ENCODE measurements at regions of chr1 and their contacts with region 1.

Region 1: GRCh38 chr1:113072757-113073478 is at the start of gene LRIG2:
- DNase-seq: peak; percentile 99
- H3K4me3 Mint-ChIP-seq: peak within 1 kb of the TSS; percentile 100
- H3K27ac Mint-ChIP-seq: peak within 1 kb of the TSS; percentile 93
- H3K4me1 Mint-ChIP-seq: peaks cover 20% of the 10 kb centered on the region
- H3K27me3 Mint-ChIP-seq: no peaks in the 10 kb centered on the region
- total RNA-seq, gene LRIG2: 11.8 and 12.7 TPM in 2 replicates

Region 2: GRCh38 chr1:112508278-112509004 is 564.5 kb before region 1 on chr1 and contains the start of gene WNT2B:
- intact Hi-C with region 1: loop called (anchors 2 kb)
- DNase-seq: peak; percentile 86
- H3K4me3 Mint-ChIP-seq: peak within 1 kb of the TSS; percentile 82
- H3K27ac Mint-ChIP-seq: no peak within 1 kb of the TSS
- H3K4me1 Mint-ChIP-seq: peaks cover 8% of the 10 kb centered on the region
- H3K27me3 Mint-ChIP-seq: peaks cover 57% of the 10 kb centered on the region
- total RNA-seq, gene WNT2B: 0.05 TPM in 1 of 2 replicates, not detected in the other

Region 3: GRCh38 chr1:112809253-112809684 is 263.6 kb before region 1 on chr1:
- intact Hi-C with region 1: loop called (anchors 2 kb)
- DNase-seq: peak; percentile 91
- H3K4me3 Mint-ChIP-seq: no peak overlapping the region
- H3K27ac Mint-ChIP-seq: no peak overlapping the region
- H3K4me1 Mint-ChIP-seq: peaks cover 2% of the 10 kb centered on the region
- H3K27me3 Mint-ChIP-seq: peaks cover 22% of the 10 kb centered on the region

Region 4: DNA sequence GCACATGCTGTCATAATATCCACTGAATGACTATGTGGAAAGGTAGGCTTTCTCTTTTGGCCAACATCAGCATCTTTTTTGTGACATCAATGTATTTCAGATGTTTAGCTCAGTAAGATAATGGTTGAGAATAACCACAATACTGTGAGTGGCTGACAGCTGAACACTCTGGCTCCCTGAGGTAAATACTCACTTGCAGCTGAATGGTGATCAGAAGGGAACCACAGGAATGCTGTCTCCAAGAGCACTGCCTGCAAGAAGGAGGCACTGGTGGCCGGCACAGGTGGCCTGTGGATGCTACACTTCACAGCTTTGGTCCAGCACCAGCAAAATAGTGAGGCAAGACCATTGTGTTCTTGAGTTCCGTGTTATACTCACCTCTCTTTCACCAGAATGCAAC is 239.1 kb before region 1 on chr1:
- intact Hi-C with region 1: no loop called
- DNase-seq: no peak
- H3K4me3 Mint-ChIP-seq: no peak overlapping the region
- H3K27ac Mint-ChIP-seq: no peak overlapping the region
- H3K4me1 Mint-ChIP-seq: no peaks in the 10 kb centered on the region
- H3K27me3 Mint-ChIP-seq: peaks cover 20% of the 10 kb centered on the region

Region 5: DNA sequence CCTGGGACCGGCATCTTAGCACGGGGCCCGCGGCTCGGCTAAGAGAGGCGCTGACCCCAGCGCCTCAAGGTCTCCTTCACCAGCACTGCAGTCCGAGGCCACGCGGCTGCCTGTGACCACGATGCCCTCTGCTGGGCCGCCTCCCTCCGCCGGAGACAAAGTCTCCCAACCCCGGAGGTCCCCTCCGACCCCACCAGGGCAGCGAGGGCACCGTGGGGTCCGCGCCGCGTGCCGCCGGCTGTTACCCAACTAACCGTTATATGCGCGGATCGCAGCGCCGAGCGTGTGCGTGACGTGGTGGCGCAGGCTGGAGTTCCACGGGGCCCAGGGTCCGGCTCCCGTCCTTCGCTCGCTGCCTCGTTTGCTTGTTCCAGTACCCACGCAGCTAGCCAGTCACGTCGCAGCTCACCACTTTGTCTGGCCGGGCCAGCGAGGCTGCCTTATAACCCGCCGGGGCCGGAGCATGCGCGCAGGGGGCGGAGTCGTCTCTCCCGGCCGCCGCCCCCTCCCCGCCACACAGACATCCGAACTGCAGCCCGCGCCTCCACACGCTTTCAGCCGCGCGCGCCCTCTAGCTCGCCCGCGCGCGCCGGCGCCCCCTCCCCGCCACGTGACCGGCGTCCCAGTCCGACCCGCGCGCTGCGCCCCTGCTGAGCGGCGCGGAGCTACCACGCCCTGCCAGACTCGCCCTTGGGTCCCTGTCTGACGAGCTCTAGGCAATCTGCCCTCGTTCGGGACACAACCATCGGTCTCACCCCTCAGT is 117.0 kb before region 1 on chr1 and contains the start of gene SLC16A1:
- intact Hi-C with region 1: loop called (anchors 2 kb)
- DNase-seq: peak; percentile 97
- H3K4me3 Mint-ChIP-seq: peak within 1 kb of the TSS; percentile 88
- H3K27ac Mint-ChIP-seq: peak within 1 kb of the TSS; percentile 100
- H3K4me1 Mint-ChIP-seq: peaks cover 51% of the 10 kb centered on the region
- H3K27me3 Mint-ChIP-seq: no peaks in the 10 kb centered on the region
- total RNA-seq, gene SLC16A1: 79.2 and 79.7 TPM in 2 replicates

Region 6: DNA sequence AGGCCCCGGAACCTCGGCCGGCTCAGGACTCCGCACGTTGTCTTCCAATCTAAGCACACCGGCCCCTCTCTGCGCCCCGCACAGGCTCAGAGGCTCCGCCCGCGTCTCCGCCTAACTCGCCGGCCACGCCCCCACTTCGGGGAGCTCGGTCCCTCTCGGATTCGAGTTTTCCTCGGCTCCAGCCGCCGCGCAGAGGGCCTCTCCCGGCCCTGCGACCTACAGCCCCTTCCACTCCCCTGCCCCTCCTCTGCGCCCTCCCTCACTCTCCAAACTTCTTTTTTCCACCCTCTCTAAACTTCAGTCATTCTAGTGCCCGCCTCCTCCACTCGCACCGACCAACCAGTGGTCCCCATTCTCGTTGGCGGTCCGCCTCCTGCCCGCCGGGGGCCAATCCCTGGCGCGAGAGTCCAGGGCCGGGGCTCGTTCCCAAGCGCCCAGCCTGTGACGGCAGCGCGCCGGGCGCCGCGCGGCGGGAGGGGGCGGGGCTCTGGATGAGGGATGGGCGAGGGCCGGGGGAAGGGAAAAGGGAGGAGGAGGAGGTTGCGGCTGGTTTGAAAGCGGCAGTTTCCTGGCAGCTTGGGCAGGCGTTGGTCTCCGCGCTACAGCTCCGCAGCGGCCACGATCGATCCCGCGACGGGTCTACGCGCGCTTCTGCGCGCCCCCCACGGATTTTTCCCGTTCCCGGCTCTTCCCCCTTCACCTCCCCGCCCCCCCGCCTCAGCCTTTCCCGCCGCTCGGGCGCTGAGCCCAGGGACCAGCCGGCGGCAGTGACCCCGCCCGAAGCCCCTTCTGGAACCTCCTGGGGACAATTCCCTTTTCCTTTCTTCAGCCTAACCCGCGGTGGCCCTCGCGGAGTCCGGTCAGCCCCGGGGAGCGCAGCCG is 317.3 kb after region 1 on chr1 and contains the start of gene MAGI3:
- intact Hi-C with region 1: loop called (anchors 5 kb)
- DNase-seq: peak; percentile 99
- H3K4me3 Mint-ChIP-seq: peak within 1 kb of the TSS; percentile 90
- H3K27ac Mint-ChIP-seq: peak within 1 kb of the TSS; percentile 74
- H3K4me1 Mint-ChIP-seq: peaks cover 28% of the 10 kb centered on the region
- H3K27me3 Mint-ChIP-seq: peaks cover 46% of the 10 kb centered on the region
- total RNA-seq, gene MAGI3: 3.7 and 3.8 TPM in 2 replicates

Measured in activated CD4-positive, alpha-beta T cell treated with anti-CD3 and anti-CD28 coated beads, Interleukin-2, amount 10 ng/mL, durations not matched to agents 24 days and 14 days (primary cell).